OCI-LY7 (cell line): ENCODE measurements at regions of chr2 and their contacts with region 1.

Region 1: GRCh38 chr2:183078465-183079138 is at the start of gene DUSP19:
- DNase-seq: peak; percentile 89
- H3K4me3 ChIP-seq: peak within 1 kb of the TSS; percentile 77
- H3K27ac ChIP-seq: peak within 1 kb of the TSS; percentile 13
- H3K4me1 ChIP-seq: peaks cover 15% of the 10 kb centered on the region
- CTCF ChIP-seq: no peak
- total RNA-seq, gene DUSP19: 1.0 and 1.2 TPM in 2 replicates

Region 2: GRCh38 chr2:182015334-182016109 is 1063.1 kb before region 1 on chr2:
- CTCF ChIA-PET with region 1: no interaction called
- POLR2A ChIA-PET with region 1: no interaction called
- intact Hi-C with region 1: no loop called
- DNase-seq: no peak
- H3K4me3 ChIP-seq: no peak overlapping the region
- H3K27ac ChIP-seq: no peak overlapping the region
- H3K4me1 ChIP-seq: no peaks in the 10 kb centered on the region
- CTCF ChIP-seq: no peak

Region 3: GRCh38 chr2:183068561-183068960 is 10.0 kb before region 1 on chr2:
- CTCF ChIA-PET with region 1: no interaction called
- POLR2A ChIA-PET with region 1: interaction called, 15 read pairs
- intact Hi-C with region 1: no loop called
- DNase-seq: no peak
- H3K4me3 ChIP-seq: no peak overlapping the region
- H3K27ac ChIP-seq: no peak overlapping the region
- H3K4me1 ChIP-seq: no peaks in the 10 kb centered on the region
- CTCF ChIP-seq: no peak